HepG2 (cell line): ENCODE measurements at regions of chr1 and their contacts with region 1.

Region 1: GRCh38 chr1:236523701-236524141 is at the start of gene LGALS8:
- DNase-seq: peak; percentile 43
- ATAC-seq: peak; percentile 74
- H3K4me3 ChIP-seq: peak within 1 kb of the TSS; percentile 74 to 95 (median 80)
- H3K27ac ChIP-seq: peak within 1 kb of the TSS; percentile 93
- H3K4me1 ChIP-seq: peaks cover 70% of the 10 kb centered on the region
- H3K27me3 ChIP-seq: no peaks in the 10 kb centered on the region; a peak in 1 of 5 replicates
- CTCF ChIP-seq: no peak
- EP300 ChIP-seq: no peak
- POLR2A ChIP-seq: peak in 1 of 2 experiments; percentile 51; a peak in 1 of 4 replicates
- RAD21 ChIP-seq: no peak
- total RNA-seq, gene LGALS8: 29.3 and 42.1 TPM in 2 replicates

Region 2: DNA sequence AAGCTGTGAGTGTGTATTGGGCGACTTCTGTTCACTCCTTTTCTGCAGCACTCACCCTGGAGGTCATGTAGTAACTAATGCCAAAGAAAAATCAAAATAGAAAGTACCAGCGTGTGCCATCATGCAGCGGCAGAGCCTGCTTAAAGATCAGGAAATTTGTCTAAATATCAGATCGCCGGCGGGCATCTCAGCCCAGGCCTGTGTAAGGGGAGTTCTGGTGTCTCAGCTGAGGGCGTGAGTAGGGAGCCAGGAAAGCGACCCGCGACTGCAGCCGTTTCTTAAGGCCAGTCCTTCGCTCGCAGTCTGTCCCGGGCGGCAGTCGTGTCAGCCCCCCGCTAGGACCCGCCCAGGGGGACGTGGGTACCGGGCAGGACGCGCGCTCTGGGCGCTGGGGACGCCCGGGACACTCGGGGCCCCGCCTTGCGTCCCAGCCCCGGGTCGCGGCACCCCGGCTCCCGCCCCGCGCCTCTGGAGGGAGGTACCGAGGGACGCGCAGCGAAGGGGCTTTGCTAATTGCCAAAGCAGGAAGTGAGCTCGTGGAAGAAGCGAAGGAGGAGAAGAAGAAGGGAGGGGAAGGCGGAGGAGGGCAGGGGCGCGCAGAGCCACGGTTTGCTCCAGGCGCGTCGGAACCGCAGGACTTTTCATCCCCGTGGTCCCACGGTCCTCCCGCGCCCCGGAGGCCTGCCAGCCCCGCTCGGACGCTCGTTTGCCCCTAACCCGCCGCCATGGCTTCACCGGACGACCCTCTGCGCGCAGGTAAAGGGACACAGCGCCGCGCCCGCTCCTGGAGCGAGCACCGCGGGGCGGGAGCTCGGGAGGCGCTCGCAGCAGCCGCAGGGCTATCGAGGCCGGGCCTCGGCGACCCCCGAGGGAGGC is 128.6 kb before region 1 on chr1:
- CTCF ChIA-PET with region 1: no interaction called
- POLR2A ChIA-PET with region 1: no interaction called
- in situ Hi-C with region 1: no loop called
- intact Hi-C with region 1: loop called (anchors 5 kb)
- DNase-seq: no peak
- ATAC-seq: no peak
- H3K4me3 ChIP-seq: peak overlapping the region; percentile 49 to 71 (median 70); a peak in 5 of 6 replicates
- H3K27ac ChIP-seq: no peak overlapping the region
- H3K4me1 ChIP-seq: peaks cover 38% of the 10 kb centered on the region
- H3K27me3 ChIP-seq: peaks cover 7 to 58% of the 10 kb centered on the region in 2 experiments
- CTCF ChIP-seq: no peak
- EP300 ChIP-seq: no peak
- POLR2A ChIP-seq: no peak
- RAD21 ChIP-seq: no peak

Region 3: GRCh38 chr1:236495467-236496112 is 28.1 kb before region 1 on chr1:
- CTCF ChIA-PET with region 1: no interaction called
- POLR2A ChIA-PET with region 1: interaction called, 26 read pairs
- in situ Hi-C with region 1: no loop called
- intact Hi-C with region 1: loop called (anchors 2 kb)
- DNase-seq: peak; percentile 53
- ATAC-seq: peak; percentile 12; the same call in 2 of the 3 replicates
- H3K4me3 ChIP-seq: 0 out of 6 replicates have a peak overlapping the region, but pooled peaks of 1 of the 3 experiments have one; percentile 45
- H3K27ac ChIP-seq: peak overlapping the region; percentile 88
- H3K4me1 ChIP-seq: peaks cover 76% of the 10 kb centered on the region
- H3K27me3 ChIP-seq: no peaks in the 10 kb centered on the region
- CTCF ChIP-seq: no peak
- EP300 ChIP-seq: no peak
- POLR2A ChIP-seq: no peak
- RAD21 ChIP-seq: no peak

Region 4: GRCh38 chr1:236502885-236503639 is 20.7 kb before region 1 on chr1:
- CTCF ChIA-PET with region 1: no interaction called
- POLR2A ChIA-PET with region 1: interaction called, 11 read pairs
- in situ Hi-C with region 1: no loop called
- intact Hi-C with region 1: no loop called
- DNase-seq: peak; percentile 91
- ATAC-seq: peak; percentile 94
- H3K4me3 ChIP-seq: peak overlapping the region in 1 of 3 experiments; percentile 25; a peak in 1 of 6 replicates
- H3K27ac ChIP-seq: peak overlapping the region; percentile 89
- H3K4me1 ChIP-seq: peaks cover 78% of the 10 kb centered on the region
- H3K27me3 ChIP-seq: no peaks in the 10 kb centered on the region
- CTCF ChIP-seq: no peak
- EP300 ChIP-seq: peak in 1 of 2 experiments; percentile 72; a peak in 1 of 4 replicates
- POLR2A ChIP-seq: peak; percentile 53 to 56
- RAD21 ChIP-seq: no peak

Region 5: GRCh38 chr1:236543065-236543669 is 19.4 kb after region 1 on chr1:
- CTCF ChIA-PET with region 1: no interaction called
- POLR2A ChIA-PET with region 1: no interaction called
- in situ Hi-C with region 1: no loop called
- intact Hi-C with region 1: no loop called
- DNase-seq: no peak
- ATAC-seq: peak; percentile 76
- H3K4me3 ChIP-seq: no peak overlapping the region
- H3K27ac ChIP-seq: no peak overlapping the region
- H3K4me1 ChIP-seq: no peaks in the 10 kb centered on the region
- H3K27me3 ChIP-seq: no peaks in the 10 kb centered on the region
- CTCF ChIP-seq: no peak
- EP300 ChIP-seq: no peak
- POLR2A ChIP-seq: no peak
- RAD21 ChIP-seq: no peak